ENCODE measurements at regions of chr10 and their contacts with region 1.

Region 1: DNA sequence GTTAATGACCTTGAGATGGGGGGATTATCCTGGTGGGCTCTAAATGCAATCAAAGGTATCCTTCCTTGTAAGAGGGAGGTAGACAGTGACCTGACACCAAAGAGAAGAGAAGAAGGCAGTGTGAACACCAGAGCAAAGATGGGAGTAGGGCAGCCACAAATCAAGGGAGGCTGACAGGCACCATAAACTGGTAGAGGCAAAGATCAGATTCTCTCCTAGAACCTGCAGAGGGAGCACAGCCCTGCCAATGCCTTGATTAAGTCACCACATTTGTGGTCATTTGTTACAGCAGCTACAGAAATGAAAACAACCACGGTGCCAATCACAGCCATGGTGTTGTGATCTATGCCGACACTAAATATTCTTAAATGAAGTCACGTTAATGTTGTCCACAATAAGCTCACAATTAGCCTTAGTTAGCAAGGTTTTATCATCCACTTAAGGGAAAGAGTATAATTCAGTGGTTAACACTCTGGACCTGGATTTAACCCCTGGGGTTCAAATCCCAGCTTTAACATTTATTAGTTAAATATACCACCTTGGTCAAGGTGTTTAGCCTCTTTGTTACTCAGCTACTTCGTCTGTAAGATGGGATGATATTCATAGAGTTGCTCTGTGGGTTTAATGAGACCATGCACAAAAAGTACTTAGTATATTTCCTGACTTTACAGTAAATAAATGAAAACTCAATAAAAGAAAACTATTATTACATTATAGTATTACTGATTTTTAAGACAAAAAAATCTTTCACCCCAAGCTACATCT is 70.8 kb downstream of the SGMS1 start:
- DNase-seq: no peak
- ATAC-seq: no peak
- H3K4me3 ChIP-seq: no peak overlapping the region
- H3K27ac ChIP-seq: peak overlapping the region in 8 of 12 donors; percentile 36 to 59 (median 44)
- H3K4me1 ChIP-seq: peaks cover 3 to 85% (median 61%) of the 10 kb centered on the region in 12 donors
- H3K27me3 ChIP-seq: no peaks in the 10 kb centered on the region
- CTCF ChIP-seq: peak in 6 of 12 donors; percentile 13 to 36 (median 21)
- POLR2A ChIP-seq: no peak

Region 2: DNA sequence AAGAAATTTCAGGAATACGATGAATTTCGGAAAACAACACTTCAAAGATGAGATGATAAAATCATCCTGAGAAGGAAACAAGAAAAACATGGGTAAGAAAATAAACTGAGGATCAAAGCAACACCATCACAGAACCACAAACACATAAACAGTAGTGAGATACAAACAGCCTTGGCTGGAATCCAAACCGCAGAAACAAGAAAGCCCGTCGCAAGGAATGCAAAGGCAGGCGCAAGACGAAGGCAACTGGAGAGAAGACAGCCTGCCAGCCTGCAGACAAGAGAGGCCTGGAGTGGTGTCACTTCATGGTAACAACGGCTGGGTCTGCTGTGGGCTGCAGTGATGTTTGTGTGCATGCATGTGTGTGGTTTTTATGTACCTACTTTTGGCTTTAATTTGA is 1095.3 kb before region 1 on chr10:
- intact Hi-C with region 1: no loop called
- DNase-seq: no peak
- ATAC-seq: no peak
- H3K4me3 ChIP-seq: no peak overlapping the region
- H3K27ac ChIP-seq: no peak overlapping the region
- H3K4me1 ChIP-seq: no peaks in the 10 kb centered on the region
- H3K27me3 ChIP-seq: no peaks in the 10 kb centered on the region
- CTCF ChIP-seq: no peak
- POLR2A ChIP-seq: no peak

Region 3: DNA sequence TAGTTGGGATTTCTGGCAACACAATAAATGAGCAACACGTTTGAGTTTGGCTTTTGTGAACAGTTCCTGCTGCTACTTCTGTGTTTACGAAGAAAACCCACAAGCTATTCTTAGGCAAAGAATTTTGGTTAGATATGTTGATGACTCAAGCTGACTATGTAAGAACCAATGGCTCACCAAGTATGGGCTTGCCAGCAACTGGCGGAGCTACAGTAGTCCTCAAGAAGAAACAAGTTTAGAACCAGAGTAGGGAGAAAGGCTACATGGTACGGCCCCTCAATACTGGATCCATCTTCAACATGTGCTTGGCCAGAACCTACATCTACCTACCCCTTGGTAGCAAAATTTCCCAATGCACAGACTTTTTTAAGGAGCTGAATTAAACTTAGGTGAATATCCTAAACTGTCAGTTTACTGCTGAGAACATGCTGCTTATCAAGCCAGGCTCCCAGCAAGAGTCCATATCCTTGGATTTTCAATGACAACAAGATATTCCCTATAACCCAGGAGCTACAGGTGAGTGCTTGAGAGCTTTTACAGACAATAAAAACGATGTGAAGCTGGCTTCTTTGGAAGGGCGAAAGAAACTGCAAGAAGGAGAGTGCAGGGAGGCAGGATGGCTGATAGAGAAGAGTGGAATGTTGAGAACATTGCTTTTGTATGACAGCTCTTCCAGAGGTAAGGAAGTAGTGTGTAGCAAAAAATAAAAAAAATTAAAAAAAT is 227.3 kb before region 1 on chr10:
- intact Hi-C with region 1: loop called in 1 of 10 experiments (anchors 10 kb)
- DNase-seq: peak in 4 of 5 donors; percentile 23 to 79 (median 56)
- ATAC-seq: peak; percentile 66 to 92 (median 88)
- H3K4me3 ChIP-seq: peak overlapping the region in 8 of 12 donors; percentile 10 to 50 (median 34)
- H3K27ac ChIP-seq: peak overlapping the region in 11 of 12 donors; percentile 18 to 84 (median 69)
- H3K4me1 ChIP-seq: peaks cover 0 to 84% (median 41%) of the 10 kb centered on the region in 12 donors
- H3K27me3 ChIP-seq: no peaks in the 10 kb centered on the region
- CTCF ChIP-seq: no peak
- POLR2A ChIP-seq: peak in 1 of 2 donors; percentile 8

Region 4: GRCh38 chr10:50373821-50374501 is 179.0 kb before region 1 on chr10:
- intact Hi-C with region 1: loop called in 1 of 10 experiments (anchors 5 kb)
- DNase-seq: no peak
- ATAC-seq: peak; percentile 29 to 67 (median 55)
- H3K4me3 ChIP-seq: no peak overlapping the region
- H3K27ac ChIP-seq: peak overlapping the region in 11 of 12 donors; percentile 1 to 75 (median 50)
- H3K4me1 ChIP-seq: peaks cover 0 to 29% (median 22%) of the 10 kb centered on the region in 12 donors
- H3K27me3 ChIP-seq: no peaks in the 10 kb centered on the region
- CTCF ChIP-seq: no peak
- POLR2A ChIP-seq: no peak

Region 5: DNA sequence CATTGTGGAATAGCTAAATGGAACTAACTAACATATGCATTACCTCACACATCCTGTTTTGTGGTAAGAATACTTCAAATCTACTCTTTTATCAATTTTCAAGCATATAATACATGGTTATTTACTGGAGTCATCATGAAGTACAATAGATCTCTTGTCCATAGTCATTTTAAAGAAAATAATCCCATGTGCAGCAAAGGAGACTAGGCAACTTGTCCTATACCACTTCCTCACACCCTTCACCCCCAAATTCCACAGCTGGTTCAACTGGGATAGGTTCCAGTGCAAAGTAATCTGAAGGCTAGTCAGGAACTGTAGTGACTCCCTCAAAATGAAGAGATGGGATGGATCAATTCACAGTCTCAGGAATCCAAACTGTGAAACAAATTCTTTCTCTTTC is 105.3 kb before region 1 on chr10:
- intact Hi-C with region 1: loop called in 1 of 10 experiments (anchors 10 kb)
- DNase-seq: no peak
- ATAC-seq: no peak
- H3K4me3 ChIP-seq: no peak overlapping the region
- H3K27ac ChIP-seq: no peak overlapping the region
- H3K4me1 ChIP-seq: peaks cover 0 to 8% (median 0%) of the 10 kb centered on the region in 12 donors
- H3K27me3 ChIP-seq: no peaks in the 10 kb centered on the region
- CTCF ChIP-seq: no peak
- POLR2A ChIP-seq: no peak

Region 6: GRCh38 chr10:50497757-50498156 is 55.2 kb before region 1 on chr10:
- intact Hi-C with region 1: loop called in 1 of 10 experiments (anchors 5 kb)
- DNase-seq: no peak
- ATAC-seq: peak in 3 of 4 donors; percentile 73 to 77 (median 75)
- H3K4me3 ChIP-seq: peak overlapping the region in 6 of 12 donors; percentile 6 to 22 (median 18)
- H3K27ac ChIP-seq: peak overlapping the region; percentile 22 to 79 (median 56)
- H3K4me1 ChIP-seq: peaks cover 0 to 40% (median 24%) of the 10 kb centered on the region in 12 donors
- H3K27me3 ChIP-seq: no peaks in the 10 kb centered on the region
- CTCF ChIP-seq: no peak
- POLR2A ChIP-seq: no peak

Measured in heart left ventricle (tissue), 16 donors.